HepG2 (cell line): ENCODE measurements at regions of chr3 and their contacts with region 1.

Region 1: DNA sequence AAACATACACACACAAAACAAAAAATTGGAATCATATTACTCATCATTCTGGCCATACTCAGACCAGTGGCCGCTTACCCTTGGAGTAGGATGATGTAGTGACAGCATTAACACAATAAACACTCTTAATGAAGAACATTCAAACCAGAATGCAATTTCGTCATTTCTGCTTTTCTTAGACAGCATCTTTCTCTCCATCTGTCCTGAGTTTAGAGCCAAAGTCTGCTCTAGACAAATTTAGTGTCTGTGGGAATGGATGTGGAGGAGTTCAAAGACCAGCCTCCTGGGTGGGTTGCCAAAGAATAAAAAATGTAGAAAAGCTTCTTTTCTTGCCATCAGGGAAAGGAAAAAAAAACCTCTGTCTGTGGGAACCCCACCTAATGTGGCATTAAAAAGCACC is 212.4 kb upstream of the POU1F1 start:
- DNase-seq: no peak
- ATAC-seq: no peak
- H3K4me3 ChIP-seq: no peak overlapping the region
- H3K27ac ChIP-seq: no peak overlapping the region
- H3K4me1 ChIP-seq: no peaks in the 10 kb centered on the region
- H3K27me3 ChIP-seq: no peaks in the 10 kb centered on the region
- CTCF ChIP-seq: no peak
- EP300 ChIP-seq: no peak
- POLR2A ChIP-seq: no peak
- RAD21 ChIP-seq: no peak

Region 2: DNA sequence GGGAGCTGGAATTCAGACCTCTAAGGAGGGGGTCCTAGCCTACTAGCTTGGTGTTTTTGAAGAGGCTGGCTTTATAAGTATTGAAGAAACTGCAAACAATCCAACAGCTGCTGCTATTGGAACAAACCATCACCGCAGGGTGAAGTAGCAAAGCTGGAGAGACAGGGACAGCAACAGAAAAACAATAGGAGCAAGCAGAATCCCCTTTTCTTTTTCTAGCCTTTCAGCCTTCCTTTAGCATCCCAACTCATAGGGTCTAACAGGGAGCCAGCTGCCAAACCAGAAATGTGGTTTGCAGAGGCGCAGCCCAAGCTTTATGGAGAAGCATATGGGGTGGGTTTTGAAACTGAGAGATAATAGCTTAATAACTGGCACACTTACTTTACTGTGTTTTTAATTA is 367.9 kb before region 1 on chr3:
- CTCF ChIA-PET with region 1: no interaction called
- POLR2A ChIA-PET with region 1: no interaction called
- in situ Hi-C with region 1: no loop called
- intact Hi-C with region 1: no loop called
- DNase-seq: no peak
- ATAC-seq: no peak
- H3K4me3 ChIP-seq: no peak overlapping the region
- H3K27ac ChIP-seq: no peak overlapping the region
- H3K4me1 ChIP-seq: no peaks in the 10 kb centered on the region
- H3K27me3 ChIP-seq: no peaks in the 10 kb centered on the region
- CTCF ChIP-seq: no peak
- EP300 ChIP-seq: no peak
- POLR2A ChIP-seq: no peak
- RAD21 ChIP-seq: no peak

Region 3: DNA sequence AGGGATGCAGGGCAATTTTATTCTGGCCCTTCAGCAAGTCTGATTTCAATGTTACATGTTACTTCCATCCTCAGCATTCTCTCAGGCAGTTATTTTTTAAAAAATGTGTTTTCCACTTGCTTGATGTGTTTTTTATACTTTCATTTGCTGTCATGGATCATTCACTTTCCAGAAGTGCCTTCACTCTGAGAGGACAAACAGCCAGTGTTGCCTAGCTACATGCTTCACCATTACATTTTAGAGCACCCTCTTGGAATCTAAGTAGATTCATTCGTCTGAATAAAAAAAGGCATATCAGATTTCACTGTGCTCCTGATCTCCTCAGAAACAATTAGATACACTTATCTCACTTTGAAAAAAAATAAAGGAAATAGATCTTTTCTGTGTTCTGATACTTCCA is 118.8 kb before region 1 on chr3:
- CTCF ChIA-PET with region 1: no interaction called
- POLR2A ChIA-PET with region 1: no interaction called
- in situ Hi-C with region 1: no loop called
- intact Hi-C with region 1: no loop called
- DNase-seq: no peak
- ATAC-seq: no peak
- H3K4me3 ChIP-seq: no peak overlapping the region
- H3K27ac ChIP-seq: no peak overlapping the region
- H3K4me1 ChIP-seq: no peaks in the 10 kb centered on the region
- H3K27me3 ChIP-seq: no peaks in the 10 kb centered on the region
- CTCF ChIP-seq: no peak
- EP300 ChIP-seq: no peak
- POLR2A ChIP-seq: no peak
- RAD21 ChIP-seq: no peak

Region 4: DNA sequence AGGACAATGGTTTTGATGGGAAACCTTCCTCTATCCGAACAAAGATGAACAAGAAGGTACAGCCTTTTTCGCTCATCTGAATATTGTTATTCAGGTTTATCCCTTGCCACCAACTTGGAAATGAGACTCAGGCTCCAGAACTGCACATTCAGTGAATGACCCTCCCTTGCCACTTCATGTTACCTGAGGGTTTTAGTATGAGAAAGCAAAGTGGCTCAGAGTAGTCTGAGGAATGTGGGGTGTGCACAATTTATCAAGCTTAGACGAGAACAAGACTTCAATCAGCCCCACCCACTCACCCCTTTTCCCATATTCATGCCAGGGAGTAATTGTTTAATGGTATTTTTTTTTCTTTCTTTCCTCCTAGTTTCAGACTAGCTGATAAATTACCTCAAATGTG is 53.0 kb after region 1 on chr3:
- CTCF ChIA-PET with region 1: no interaction called
- POLR2A ChIA-PET with region 1: no interaction called
- in situ Hi-C with region 1: no loop called
- intact Hi-C with region 1: loop called (anchors 10 kb)
- DNase-seq: no peak
- ATAC-seq: no peak
- H3K4me3 ChIP-seq: no peak overlapping the region
- H3K27ac ChIP-seq: no peak overlapping the region
- H3K4me1 ChIP-seq: no peaks in the 10 kb centered on the region
- H3K27me3 ChIP-seq: no peaks in the 10 kb centered on the region
- CTCF ChIP-seq: no peak
- EP300 ChIP-seq: no peak
- POLR2A ChIP-seq: no peak
- RAD21 ChIP-seq: no peak